ENCODE measurements at regions of chr19 and their contacts with region 1.

Region 1: DNA sequence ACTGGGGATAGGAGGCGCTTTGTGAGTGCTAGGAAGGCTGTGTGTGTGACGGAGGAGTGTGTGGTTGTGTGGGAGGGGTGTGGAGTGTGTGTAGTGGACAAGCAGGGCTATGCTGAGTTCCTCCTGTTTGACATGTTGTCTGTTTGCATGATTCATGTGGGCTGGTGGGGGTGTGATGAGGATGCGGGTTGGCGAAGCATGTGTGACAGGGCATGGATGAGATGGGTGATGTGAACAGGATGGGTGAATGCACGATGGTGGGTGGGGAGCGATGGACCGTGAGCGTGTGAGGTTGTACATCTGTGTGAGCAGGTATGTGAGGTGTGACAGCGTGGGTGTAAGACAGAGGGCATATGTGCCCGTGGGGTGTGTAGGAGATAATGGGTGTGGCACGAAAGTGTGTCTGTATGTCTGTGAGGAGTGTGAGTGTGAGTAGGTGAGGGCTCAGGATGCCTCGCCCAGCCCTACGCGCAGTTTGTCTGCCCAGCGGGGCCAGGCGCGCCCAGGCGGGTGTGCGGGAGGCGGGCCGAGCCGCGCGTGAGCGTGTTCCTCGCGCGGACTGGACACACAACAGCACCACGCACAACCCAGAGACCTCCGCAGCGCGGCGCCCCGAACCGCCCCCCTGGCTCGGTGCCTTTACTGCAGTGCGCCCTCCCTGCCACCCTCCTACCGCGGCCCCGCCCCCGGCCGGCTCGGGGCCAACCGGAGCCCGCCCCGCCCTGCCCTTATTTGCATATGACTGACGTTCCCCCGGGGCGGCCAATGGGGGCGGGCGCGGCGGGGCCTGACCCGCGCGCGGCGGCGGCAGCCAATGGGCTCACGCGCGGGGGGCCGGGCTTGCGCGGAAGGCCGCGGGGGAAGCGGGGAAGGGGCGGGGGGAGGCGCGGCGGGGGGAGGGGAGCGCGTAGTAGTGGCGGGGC is 14.4 kb downstream of the CIC start:
- DNase-seq: peak; percentile 91
- ATAC-seq: peak; percentile 64
- H3K4me3 Mint-ChIP-seq: no peak overlapping the region
- H3K27ac Mint-ChIP-seq: no peak overlapping the region
- H3K4me1 Mint-ChIP-seq: peaks cover 55% of the 10 kb centered on the region
- H3K27me3 Mint-ChIP-seq: no peaks in the 10 kb centered on the region
- CTCF ChIP-seq: no peak

Region 2: DNA sequence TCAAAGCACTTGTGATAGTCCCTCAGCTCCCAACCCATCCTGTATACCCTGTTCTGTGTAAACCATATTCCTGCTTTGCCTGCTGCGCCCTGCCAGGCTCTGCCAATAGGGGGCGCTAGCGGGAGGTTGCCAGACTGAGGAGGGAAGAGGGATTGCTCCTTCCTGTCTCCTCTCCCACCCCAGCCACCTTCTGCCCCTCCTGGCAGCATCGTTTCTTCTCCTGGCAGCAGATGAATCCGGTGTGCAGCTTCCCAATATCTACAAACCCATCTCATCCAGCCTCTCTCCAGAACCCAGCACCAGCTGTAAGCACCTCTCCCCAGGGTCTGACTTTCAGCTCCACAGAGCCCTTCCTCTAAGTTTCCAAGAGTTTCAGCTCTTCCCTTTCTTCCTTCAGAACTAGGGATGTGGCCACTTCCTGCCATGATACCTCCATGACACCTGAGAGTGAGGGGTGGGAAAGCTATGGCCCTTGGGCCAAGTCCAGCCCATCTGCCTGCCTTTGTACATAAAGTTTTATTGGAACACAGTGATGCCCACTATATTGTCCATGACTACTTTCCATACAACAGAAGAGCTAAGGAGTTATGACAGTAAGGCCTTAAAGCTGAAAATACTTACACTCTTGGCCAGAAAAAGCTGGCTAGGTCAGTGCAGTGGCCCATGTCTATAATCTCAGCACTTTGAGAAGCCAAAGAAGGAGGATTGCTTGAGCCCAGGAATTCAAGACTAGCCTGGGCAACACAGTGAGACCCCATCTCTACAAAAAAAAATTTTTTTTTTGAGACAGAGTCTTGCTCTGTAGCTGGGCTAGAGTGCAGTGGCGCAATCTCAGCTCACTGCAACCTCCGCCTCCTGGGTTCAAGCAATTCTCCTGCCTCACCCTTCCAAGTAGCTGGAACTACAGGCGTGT is 254.8 kb before region 1 on chr19:
- CTCF ChIA-PET with region 1: no interaction called
- POLR2A ChIA-PET with region 1: no interaction called
- intact Hi-C with region 1: no loop called
- DNase-seq: no peak
- ATAC-seq: no peak
- H3K4me3 Mint-ChIP-seq: no peak overlapping the region
- H3K27ac Mint-ChIP-seq: no peak overlapping the region
- H3K4me1 Mint-ChIP-seq: no peaks in the 10 kb centered on the region
- H3K27me3 Mint-ChIP-seq: peaks cover 27% of the 10 kb centered on the region
- CTCF ChIP-seq: no peak

Region 3: GRCh38 chr19:42108527-42109389 is 174.6 kb before region 1 on chr19:
- CTCF ChIA-PET with region 1: interaction called, 10 read pairs
- POLR2A ChIA-PET with region 1: interaction called, 20 read pairs
- intact Hi-C with region 1: loop called (anchors 1 kb)
- DNase-seq: peak; percentile 76
- ATAC-seq: peak; percentile 92
- H3K4me3 Mint-ChIP-seq: peak overlapping the region; percentile 47
- H3K27ac Mint-ChIP-seq: peak overlapping the region; percentile 81
- H3K4me1 Mint-ChIP-seq: peaks cover 69% of the 10 kb centered on the region
- H3K27me3 Mint-ChIP-seq: no peaks in the 10 kb centered on the region
- CTCF ChIP-seq: peak; percentile 99

Region 4: GRCh38 chr19:42199440-42200115 is 83.8 kb before region 1 on chr19:
- CTCF ChIA-PET with region 1: interaction called, 7 read pairs
- POLR2A ChIA-PET with region 1: no interaction called
- intact Hi-C with region 1: loop called (anchors 5 kb)
- DNase-seq: peak; percentile 47
- ATAC-seq: peak; percentile 44
- H3K4me3 Mint-ChIP-seq: peak overlapping the region; percentile 68
- H3K27ac Mint-ChIP-seq: peak overlapping the region; percentile 93
- H3K4me1 Mint-ChIP-seq: peaks cover 87% of the 10 kb centered on the region
- H3K27me3 Mint-ChIP-seq: no peaks in the 10 kb centered on the region
- CTCF ChIP-seq: no peak

Region 5: GRCh38 chr19:42254989-42255765 is 28.2 kb before region 1 on chr19 and contains the start of gene ERF:
- CTCF ChIA-PET with region 1: no interaction called
- POLR2A ChIA-PET with region 1: interaction called, 5 read pairs
- intact Hi-C with region 1: loop called (anchors 1 kb)
- DNase-seq: peak; percentile 97
- ATAC-seq: peak; percentile 76
- H3K4me3 Mint-ChIP-seq: peak within 1 kb of the TSS; percentile 84
- H3K27ac Mint-ChIP-seq: peak within 1 kb of the TSS; percentile 73
- H3K4me1 Mint-ChIP-seq: peaks cover 28% of the 10 kb centered on the region
- H3K27me3 Mint-ChIP-seq: peaks cover 5% of the 10 kb centered on the region
- CTCF ChIP-seq: no peak
- total RNA-seq, gene ERF: 47.9 and 48.1 TPM in 2 replicates

Region 6: GRCh38 chr19:42295831-42296525 is 12.6 kb after region 1 on chr19:
- CTCF ChIA-PET with region 1: interaction called, 9 read pairs
- POLR2A ChIA-PET with region 1: interaction called, 8 read pairs
- intact Hi-C with region 1: loop called (anchors 1 kb)
- DNase-seq: peak; percentile 92
- ATAC-seq: peak; percentile 98
- H3K4me3 Mint-ChIP-seq: no peak overlapping the region
- H3K27ac Mint-ChIP-seq: no peak overlapping the region
- H3K4me1 Mint-ChIP-seq: peaks cover 7% of the 10 kb centered on the region
- H3K27me3 Mint-ChIP-seq: no peaks in the 10 kb centered on the region
- CTCF ChIP-seq: peak; percentile 90

Region 7: DNA sequence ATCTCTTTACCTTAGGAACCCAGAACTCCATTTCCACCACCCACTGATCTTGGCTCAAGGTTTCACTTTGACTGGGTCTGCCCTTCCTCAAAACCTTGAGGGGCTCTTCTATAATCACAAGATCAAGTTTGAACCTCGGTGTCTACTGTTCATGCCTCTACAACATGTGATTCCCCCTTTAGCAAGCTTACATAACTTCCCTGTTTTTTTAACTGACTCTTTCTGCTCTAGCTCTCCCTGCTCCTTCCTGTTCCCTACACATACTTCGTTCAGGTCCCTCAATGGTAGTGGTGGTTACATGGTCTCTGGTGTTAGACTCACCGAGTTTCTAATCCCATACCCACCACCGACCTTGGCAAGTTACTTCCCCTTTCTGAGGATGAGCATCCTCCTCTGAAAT is 284.6 kb after region 1 on chr19:
- CTCF ChIA-PET with region 1: no interaction called
- POLR2A ChIA-PET with region 1: no interaction called
- intact Hi-C with region 1: no loop called
- DNase-seq: no peak
- ATAC-seq: peak; percentile 65
- H3K4me3 Mint-ChIP-seq: peak overlapping the region; percentile 36
- H3K27ac Mint-ChIP-seq: peak overlapping the region; percentile 67
- H3K4me1 Mint-ChIP-seq: peaks cover 26% of the 10 kb centered on the region
- H3K27me3 Mint-ChIP-seq: peaks cover 5% of the 10 kb centered on the region
- CTCF ChIP-seq: no peak